ENCODE measurements at regions of chr11 and their contacts with region 1.

Region 1: GRCh38 chr11:134050541-134051383 is 18.1 kb upstream of the JAM3 start:
- DNase-seq: peak; percentile 66 to 81
- ATAC-seq: peak; percentile 70 to 85 (median 80)
- H3K4me3 ChIP-seq: peak overlapping the region in 7 of 10 donors; percentile 21 to 48 (median 37)
- H3K27ac ChIP-seq: peak overlapping the region in 2 of 10 donors; percentile 28 to 40
- H3K4me1 ChIP-seq: peaks cover 0 to 32% (median 14%) of the 10 kb centered on the region in 9 donors
- H3K27me3 ChIP-seq: peaks cover 0 to 12% (median 0%) of the 10 kb centered on the region in 7 donors
- CTCF ChIP-seq: peak; percentile 82 to 98 (median 95)

Region 2: DNA sequence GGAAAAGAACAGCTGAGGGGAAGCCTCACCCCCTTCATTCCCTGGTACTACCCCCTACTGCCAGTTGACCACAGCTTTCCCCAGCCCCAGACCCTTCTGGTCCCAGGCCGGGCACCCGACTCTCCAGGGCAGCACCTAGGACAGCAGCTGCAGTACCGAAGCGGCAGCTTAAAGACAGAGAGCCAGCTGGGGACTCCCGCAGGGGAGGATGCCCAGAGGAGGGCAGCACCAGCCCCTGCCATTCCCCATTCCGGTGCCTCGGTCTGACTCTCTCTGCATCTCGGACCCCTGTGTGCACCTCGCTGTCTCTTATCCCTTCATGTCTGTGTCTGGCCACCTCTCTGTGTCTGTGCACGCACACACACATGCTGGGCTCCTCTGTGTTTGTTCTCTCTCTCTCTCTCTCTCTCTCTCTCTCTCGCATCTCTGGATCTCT is 103.4 kb before region 1 on chr11:
- intact Hi-C with region 1: loop called in 3 of 10 experiments (anchors 5 kb)
- DNase-seq: peak; percentile 57 to 65
- ATAC-seq: peak; percentile 24 to 59 (median 42)
- H3K4me3 ChIP-seq: peak overlapping the region in 6 of 10 donors; percentile 1 to 32 (median 10)
- H3K27ac ChIP-seq: peak overlapping the region in 9 of 10 donors; percentile 5 to 95 (median 63)
- H3K4me1 ChIP-seq: peaks cover 27 to 88% (median 70%) of the 10 kb centered on the region in 9 donors
- H3K27me3 ChIP-seq: peaks cover 0 to 12% (median 0%) of the 10 kb centered on the region in 7 donors
- CTCF ChIP-seq: peak in 8 of 9 donors; percentile 21 to 68 (median 48)

Region 3: DNA sequence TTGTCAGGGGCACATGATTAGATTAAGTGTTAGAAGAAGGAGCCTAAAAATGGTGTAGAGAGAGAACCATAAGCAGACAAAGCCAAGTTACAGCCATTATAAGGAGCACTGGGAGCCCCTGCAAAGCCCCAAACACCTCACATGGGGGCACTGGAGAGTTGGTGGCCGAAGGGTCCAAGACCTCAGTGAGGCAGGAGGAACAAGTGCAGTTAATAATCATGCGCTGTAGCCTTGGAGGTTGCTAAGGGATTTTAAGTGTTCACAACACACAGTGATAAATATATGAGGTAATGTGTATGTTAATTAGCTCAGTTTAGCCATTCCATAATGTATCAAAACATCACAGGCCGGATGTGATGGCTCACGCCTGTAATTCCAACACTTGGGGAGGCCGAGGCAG is 36.3 kb before region 1 on chr11:
- intact Hi-C with region 1: loop called in 1 of 10 experiments (anchors 1 kb)
- DNase-seq: peak; percentile 34 to 57
- ATAC-seq: peak; percentile 50 to 93 (median 85)
- H3K4me3 ChIP-seq: no peak overlapping the region
- H3K27ac ChIP-seq: peak overlapping the region in 2 of 10 donors; percentile 22
- H3K4me1 ChIP-seq: peaks cover 0 to 10% (median 5%) of the 10 kb centered on the region in 9 donors
- H3K27me3 ChIP-seq: peaks cover 0 to 3% (median 0%) of the 10 kb centered on the region in 7 donors
- CTCF ChIP-seq: peak; percentile 21 to 64 (median 45)

Region 4: GRCh38 chr11:134139873-134140331 is 89.1 kb after region 1 on chr11:
- intact Hi-C with region 1: loop called (anchors 1 to 5 kb)
- DNase-seq: peak in 1 of 2 donors; percentile 82
- ATAC-seq: peak; percentile 86 to 94 (median 92)
- H3K4me3 ChIP-seq: no peak overlapping the region
- H3K27ac ChIP-seq: peak overlapping the region in 4 of 10 donors; percentile 27 to 45 (median 44)
- H3K4me1 ChIP-seq: peaks cover 0 to 18% (median 11%) of the 10 kb centered on the region in 9 donors
- H3K27me3 ChIP-seq: no peaks in the 10 kb centered on the region
- CTCF ChIP-seq: peak; percentile 83 to 95 (median 91)

Measured in heart right ventricle (tissue), 16 donors.